Activated CD4-positive, alpha-beta memory T cell treated with anti-CD3 and anti-CD28 coated beads for 36 hours (primary cell): ENCODE measurements at regions of chr10 and their contacts with region 1.

Region 1: GRCh38 chr10:98134431-98135221 is at the start of gene R3HCC1L:
- DNase-seq: peak; percentile 97
- H3K4me3 Mint-ChIP-seq: peak within 1 kb of the TSS; percentile 94
- H3K27ac Mint-ChIP-seq: peak within 1 kb of the TSS; percentile 85
- H3K4me1 Mint-ChIP-seq: peaks cover 43% of the 10 kb centered on the region
- H3K27me3 Mint-ChIP-seq: no peaks in the 10 kb centered on the region
- total RNA-seq, gene R3HCC1L: 13.2 to 13.3 TPM

Region 2: DNA sequence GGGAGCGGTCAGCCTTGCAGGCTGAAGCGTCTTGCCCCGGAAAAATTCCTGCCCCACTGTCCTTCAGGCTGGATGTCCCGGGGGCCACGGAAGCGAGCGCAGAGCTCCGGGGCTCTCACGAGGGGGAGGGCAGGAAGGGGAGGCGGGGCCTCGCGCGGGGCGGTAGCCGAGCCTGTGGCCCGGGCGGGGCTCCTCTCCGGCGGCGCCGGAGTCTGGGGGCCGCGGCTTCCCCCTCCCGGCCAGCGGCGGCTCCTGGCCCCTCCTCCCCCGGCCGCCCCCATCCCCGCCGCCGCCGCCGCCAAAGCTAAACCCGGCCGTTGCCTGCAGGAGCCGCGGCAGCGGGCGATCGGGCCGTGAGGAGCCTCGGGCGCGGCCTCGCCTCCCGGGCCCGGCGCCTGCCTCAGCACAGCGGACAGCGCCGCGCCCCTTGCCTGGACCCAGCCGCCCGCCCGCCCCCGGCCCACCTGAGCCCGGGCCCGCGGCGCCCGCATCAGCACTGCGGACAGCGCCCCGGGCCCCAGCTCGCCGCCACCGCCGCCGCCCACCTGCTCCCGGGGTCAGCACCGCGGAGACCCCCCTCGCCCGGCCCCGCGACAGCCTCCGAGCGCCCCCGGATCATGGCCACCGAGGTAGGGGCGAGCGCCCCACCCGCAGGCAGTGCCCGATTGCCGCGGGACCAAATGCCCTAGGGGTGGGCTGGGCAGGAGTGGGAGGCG is 284.8 kb before region 1 on chr10 and contains the start of gene GOLGA7B:
- CTCF ChIA-PET with region 1: no interaction called
- POLR2A ChIA-PET with region 1: no interaction called
- intact Hi-C with region 1: loop called (anchors 10 kb)
- DNase-seq: peak; percentile 68
- H3K4me3 Mint-ChIP-seq: peak within 1 kb of the TSS; percentile 73
- H3K27ac Mint-ChIP-seq: peak within 1 kb of the TSS; percentile 9
- H3K4me1 Mint-ChIP-seq: peaks cover 37% of the 10 kb centered on the region
- H3K27me3 Mint-ChIP-seq: no peaks in the 10 kb centered on the region
- total RNA-seq, gene GOLGA7B: 0.86 to 0.87 TPM